Sigmoid colon (tissue), 7 donors: ENCODE measurements at regions of chr11 and their contacts with region 1.

Region 1: DNA sequence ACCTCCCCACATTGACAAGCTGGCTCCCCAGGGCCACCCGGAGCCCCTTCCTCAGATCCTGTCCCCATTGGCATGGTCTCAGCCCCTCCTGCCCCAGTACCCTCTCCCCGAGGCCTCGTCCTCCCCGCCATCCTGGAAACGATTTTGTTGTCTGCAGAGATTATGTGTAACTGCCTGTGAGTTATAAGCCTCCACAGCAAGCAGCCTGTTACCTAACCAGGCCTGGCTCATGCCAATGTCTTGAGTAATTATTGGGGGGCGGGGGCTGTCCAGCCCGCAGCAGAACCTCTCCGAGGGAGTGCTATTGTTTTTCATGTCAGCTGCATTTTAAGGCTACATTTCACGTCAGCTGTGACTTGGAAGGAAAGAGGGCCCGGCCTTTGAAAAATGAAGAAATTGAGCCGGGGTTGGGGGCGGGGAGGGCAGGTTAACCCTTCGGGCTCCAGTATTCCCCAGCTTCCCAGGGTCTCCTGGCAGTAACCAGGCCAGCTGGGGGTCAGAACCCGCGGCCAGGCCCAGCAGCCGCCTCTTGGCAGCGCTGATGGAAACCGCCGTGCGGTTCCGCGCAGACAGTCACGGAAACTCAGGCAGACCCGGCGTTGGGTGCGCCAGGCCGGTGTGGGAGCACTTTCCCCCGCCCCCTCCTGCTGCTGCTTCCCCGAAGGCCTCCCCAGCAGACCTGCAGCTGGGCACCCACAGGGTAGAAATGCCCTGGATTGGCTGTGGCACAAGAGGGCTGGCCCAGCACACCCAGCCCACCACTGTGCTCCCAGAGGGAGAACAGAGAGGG is 59.5 kb downstream of the CDKN1C start:
- DNase-seq: peak; percentile 96
- H3K4me3 ChIP-seq: peak overlapping the region in 3 of 4 donors; percentile 4 to 30 (median 9)
- H3K27ac ChIP-seq: peak overlapping the region; percentile 88 to 97 (median 92)
- H3K4me1 ChIP-seq: peaks cover 0 to 42% (median 31%) of the 10 kb centered on the region in 4 donors
- H3K27me3 ChIP-seq: no peaks in the 10 kb centered on the region
- CTCF ChIP-seq: no peak
- EP300 ChIP-seq: peak in 1 of 4 donors; percentile 65
- POLR2A ChIP-seq: no peak

Region 2: GRCh38 chr11:2382936-2383851 is 442.9 kb before region 1 on chr11:
- intact Hi-C with region 1: loop called (anchors 10 kb)
- DNase-seq: peak; percentile 92
- H3K4me3 ChIP-seq: peak overlapping the region in 2 of 4 donors; percentile 1 to 18
- H3K27ac ChIP-seq: peak overlapping the region; percentile 99 to 100 (median 100)
- H3K4me1 ChIP-seq: peaks cover 0 to 95% (median 93%) of the 10 kb centered on the region in 4 donors
- H3K27me3 ChIP-seq: no peaks in the 10 kb centered on the region
- CTCF ChIP-seq: peak in 1 of 4 experiments; percentile 7
- EP300 ChIP-seq: no peak
- POLR2A ChIP-seq: no peak

Region 3: GRCh38 chr11:2675540-2675939 is 150.5 kb before region 1 on chr11:
- intact Hi-C with region 1: loop called (anchors 5 kb)
- DNase-seq: peak; percentile 77
- H3K4me3 ChIP-seq: no peak overlapping the region
- H3K27ac ChIP-seq: peak overlapping the region; percentile 8 to 85 (median 72)
- H3K4me1 ChIP-seq: peaks cover 0 to 42% (median 35%) of the 10 kb centered on the region in 4 donors
- H3K27me3 ChIP-seq: no peaks in the 10 kb centered on the region
- CTCF ChIP-seq: no peak
- EP300 ChIP-seq: no peak
- POLR2A ChIP-seq: no peak

Region 4: GRCh38 chr11:2699531-2700414 is 126.3 kb before region 1 on chr11 and contains the start of gene KCNQ1OT1:
- intact Hi-C with region 1: loop called (anchors 2 kb)
- DNase-seq: peak; percentile 97
- H3K4me3 ChIP-seq: peak within 1 kb of the TSS; percentile 60 to 75 (median 70)
- H3K27ac ChIP-seq: peak within 1 kb of the TSS; percentile 85 to 95 (median 92)
- H3K4me1 ChIP-seq: peaks cover 0 to 29% (median 4%) of the 10 kb centered on the region in 4 donors
- H3K27me3 ChIP-seq: no peaks in the 10 kb centered on the region
- CTCF ChIP-seq: no peak
- EP300 ChIP-seq: no peak
- POLR2A ChIP-seq: peak; percentile 90 to 92
- total RNA-seq, gene KCNQ1OT1: 0.99 to 3.6 (median 1.4) TPM

Region 5: GRCh38 chr11:2778630-2779498 is 47.2 kb before region 1 on chr11:
- intact Hi-C with region 1: loop called (anchors 2 kb)
- DNase-seq: peak; percentile 93
- H3K4me3 ChIP-seq: peak overlapping the region in 3 of 4 donors; percentile 9 to 24 (median 12)
- H3K27ac ChIP-seq: peak overlapping the region; percentile 79 to 90 (median 84)
- H3K4me1 ChIP-seq: peaks cover 0 to 32% (median 31%) of the 10 kb centered on the region in 4 donors
- H3K27me3 ChIP-seq: no peaks in the 10 kb centered on the region
- CTCF ChIP-seq: peak in 3 of 4 experiments; percentile 30 to 53 (median 45)
- EP300 ChIP-seq: peak in 1 of 4 donors; percentile 71
- POLR2A ChIP-seq: no peak

Region 6: GRCh38 chr11:2807025-2807681 is 18.9 kb before region 1 on chr11:
- intact Hi-C with region 1: no loop called
- DNase-seq: peak; percentile 96
- H3K4me3 ChIP-seq: peak overlapping the region in 3 of 4 donors; percentile 7 to 28 (median 14)
- H3K27ac ChIP-seq: peak overlapping the region; percentile 78 to 86 (median 81)
- H3K4me1 ChIP-seq: peaks cover 0 to 45% (median 40%) of the 10 kb centered on the region in 4 donors
- H3K27me3 ChIP-seq: no peaks in the 10 kb centered on the region
- CTCF ChIP-seq: no peak
- EP300 ChIP-seq: peak in 2 of 4 donors; percentile 35 to 79
- POLR2A ChIP-seq: no peak

Region 7: GRCh38 chr11:2992234-2992996 is 166.3 kb after region 1 on chr11 and contains the start of gene NAP1L4:
- intact Hi-C with region 1: no loop called
- DNase-seq: peak; percentile 98
- H3K4me3 ChIP-seq: peak within 1 kb of the TSS; percentile 79 to 95 (median 90)
- H3K27ac ChIP-seq: peak within 1 kb of the TSS; percentile 92 to 98 (median 95)
- H3K4me1 ChIP-seq: peaks cover 0 to 48% (median 45%) of the 10 kb centered on the region in 4 donors
- H3K27me3 ChIP-seq: no peaks in the 10 kb centered on the region
- CTCF ChIP-seq: no peak
- EP300 ChIP-seq: no peak
- POLR2A ChIP-seq: no peak
- total RNA-seq, gene NAP1L4: 88.2 to 102 (median 95.4) TPM